GM18951 (cell line): ENCODE measurements at regions of chr14 and their contacts with region 1.

Region 1: DNA sequence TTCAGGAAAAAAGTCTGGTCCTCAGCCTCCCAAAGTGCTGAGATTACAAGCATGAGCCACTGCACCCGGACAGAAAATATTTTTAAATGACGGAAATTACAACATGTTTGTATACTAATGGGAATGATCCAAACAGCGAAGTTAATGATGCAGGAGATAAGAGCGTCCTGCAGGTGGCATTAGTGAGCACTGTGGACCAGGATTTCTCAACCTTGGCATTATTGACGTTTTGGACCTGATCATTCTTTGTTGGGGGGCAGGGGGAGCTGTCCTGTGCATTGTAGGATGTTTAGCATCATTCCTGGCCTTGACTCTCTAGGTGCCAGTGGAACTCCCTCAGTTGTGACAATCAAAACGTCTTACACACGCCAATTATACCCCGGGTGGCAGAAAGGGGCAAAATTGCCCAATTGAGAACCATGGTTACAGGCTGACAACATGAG is 34.1 kb downstream of the SCFD1 start:
- POLR2A ChIP-seq: no peak

Region 2: DNA sequence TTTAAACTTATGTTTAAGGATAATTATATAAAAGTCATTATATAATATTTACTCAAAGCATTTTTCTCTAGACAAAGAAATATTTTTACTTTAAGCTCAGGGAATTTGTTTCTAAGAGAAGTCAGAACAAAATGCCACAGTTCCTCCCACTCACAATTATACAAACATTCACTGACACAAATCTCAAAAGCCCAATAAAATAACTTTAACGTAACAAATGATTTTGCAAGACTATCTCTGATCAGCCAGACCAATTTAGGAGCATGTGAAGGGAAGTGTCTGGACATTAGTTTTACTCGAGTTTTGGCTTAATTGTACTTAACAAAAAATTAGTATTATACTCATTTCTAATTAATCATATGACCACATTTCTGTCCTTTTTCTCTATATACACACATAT is 259.4 kb after region 1 on chr14:
- in situ Hi-C with region 1: loop called (anchors 10 kb)
- POLR2A ChIP-seq: no peak

Region 3: GRCh38 chr14:31090883-31091764 is 434.9 kb after region 1 on chr14:
- in situ Hi-C with region 1: loop called (anchors 25 kb)
- POLR2A ChIP-seq: no peak